ENCODE measurements at regions of chr9 and their contacts with region 1.

Region 1: GRCh38 chr9:128702445-128702948 is at the start of gene PKN3:
- DNase-seq: peak; percentile 46 to 91 (median 78)
- ATAC-seq: peak; percentile 80 to 89 (median 88)
- H3K4me3 ChIP-seq: peak within 1 kb of the TSS; percentile 51 to 75
- H3K4me3 Mint-ChIP-seq: peak within 1 kb of the TSS; percentile 78 to 85 (median 84)
- H3K27ac ChIP-seq: no peak within 1 kb of the TSS
- H3K27ac Mint-ChIP-seq: peak within 1 kb of the TSS; percentile 55 to 86
- H3K4me1 ChIP-seq: peaks cover 0 to 21% of the 10 kb centered on the region in 2 experiments
- H3K4me1 Mint-ChIP-seq: peaks cover 11 to 15% (median 13%) of the 10 kb centered on the region in 3 donors
- H3K27me3 ChIP-seq: no peaks in the 10 kb centered on the region
- H3K27me3 Mint-ChIP-seq: no peaks in the 10 kb centered on the region
- total RNA-seq, gene PKN3: 2.1 to 4.3 (median 3.7) TPM

Region 2: GRCh38 chr9:128216781-128217553 is 485.5 kb before region 1 on chr9:
- CTCF ChIA-PET with region 1: interaction called in 1 of 2 experiments, 10 read pairs
- POLR2A ChIA-PET with region 1: no interaction called
- DNase-seq: no peak
- ATAC-seq: no peak
- H3K4me3 ChIP-seq: no peak overlapping the region
- H3K4me3 Mint-ChIP-seq: peak overlapping the region in 1 of 3 donors; percentile 4
- H3K27ac ChIP-seq: no peak overlapping the region
- H3K27ac Mint-ChIP-seq: no peak overlapping the region
- H3K4me1 ChIP-seq: peaks cover 0 to 18% of the 10 kb centered on the region in 2 experiments
- H3K4me1 Mint-ChIP-seq: peaks cover 13 to 17% (median 14%) of the 10 kb centered on the region in 3 donors
- H3K27me3 ChIP-seq: peaks cover 0 to 21% of the 10 kb centered on the region in 2 experiments
- H3K27me3 Mint-ChIP-seq: peaks cover 0 to 12% of the 10 kb centered on the region in 2 donors

Region 3: GRCh38 chr9:128719919-128720605 is 17.6 kb after region 1 on chr9:
- CTCF ChIA-PET with region 1: interaction called in 1 of 2 experiments, 8 read pairs
- POLR2A ChIA-PET with region 1: interaction called in 1 of 2 experiments, 11 read pairs
- DNase-seq: no peak
- ATAC-seq: no peak
- H3K4me3 ChIP-seq: no peak overlapping the region
- H3K4me3 Mint-ChIP-seq: no peak overlapping the region
- H3K27ac ChIP-seq: no peak overlapping the region
- H3K27ac Mint-ChIP-seq: no peak overlapping the region
- H3K4me1 ChIP-seq: peaks cover 9 to 24% of the 10 kb centered on the region in 2 experiments
- H3K4me1 Mint-ChIP-seq: peaks cover 26 to 32% (median 27%) of the 10 kb centered on the region in 3 donors
- H3K27me3 ChIP-seq: no peaks in the 10 kb centered on the region
- H3K27me3 Mint-ChIP-seq: no peaks in the 10 kb centered on the region